ENCODE measurements at regions of chr9 and their contacts with region 1.

Region 1: GRCh38 chr9:4923580-4924544 is 61.2 kb upstream of the JAK2 start:
- DNase-seq: peak in 1 of 2 donors; percentile 60
- ATAC-seq: peak; percentile 60 to 74 (median 71)
- H3K4me3 ChIP-seq: no peak overlapping the region
- H3K4me3 Mint-ChIP-seq: no peak overlapping the region
- H3K27ac ChIP-seq: no peak overlapping the region
- H3K27ac Mint-ChIP-seq: peak overlapping the region in 1 of 2 donors; percentile 11
- H3K4me1 ChIP-seq: no peaks in the 10 kb centered on the region
- H3K4me1 Mint-ChIP-seq: peaks cover 6% of the 10 kb centered on the region in 2 donors
- H3K27me3 ChIP-seq: no peaks in the 10 kb centered on the region
- H3K27me3 Mint-ChIP-seq: no peaks in the 10 kb centered on the region
- CTCF ChIP-seq: peak; percentile 55

Region 2: GRCh38 chr9:4604678-4605095 is 319.2 kb before region 1 on chr9:
- intact Hi-C with region 1: loop called (anchors 1 kb)
- DNase-seq: peak; percentile 30 to 82
- ATAC-seq: peak; percentile 79 to 92 (median 81)
- H3K4me3 ChIP-seq: no peak overlapping the region
- H3K4me3 Mint-ChIP-seq: no peak overlapping the region
- H3K27ac ChIP-seq: no peak overlapping the region
- H3K27ac Mint-ChIP-seq: no peak overlapping the region
- H3K4me1 ChIP-seq: peaks cover 3% of the 10 kb centered on the region
- H3K4me1 Mint-ChIP-seq: peaks cover 6 to 20% of the 10 kb centered on the region in 2 donors
- H3K27me3 ChIP-seq: no peaks in the 10 kb centered on the region
- H3K27me3 Mint-ChIP-seq: no peaks in the 10 kb centered on the region
- CTCF ChIP-seq: peak; percentile 82

Measured in natural killer cell (primary cell).